ENCODE measurements at regions of chr3 and their contacts with region 1.

Region 1: GRCh38 chr3:138417559-138417982 is 16.8 kb upstream of the ESYT3 start:
- DNase-seq: peak; percentile 66 to 85 (median 79)
- H3K4me3 ChIP-seq: no peak overlapping the region
- H3K27ac ChIP-seq: no peak overlapping the region
- H3K27me3 ChIP-seq: no peaks in the 10 kb centered on the region
- CTCF ChIP-seq: peak; percentile 72 to 96 (median 89)

Region 2: DNA sequence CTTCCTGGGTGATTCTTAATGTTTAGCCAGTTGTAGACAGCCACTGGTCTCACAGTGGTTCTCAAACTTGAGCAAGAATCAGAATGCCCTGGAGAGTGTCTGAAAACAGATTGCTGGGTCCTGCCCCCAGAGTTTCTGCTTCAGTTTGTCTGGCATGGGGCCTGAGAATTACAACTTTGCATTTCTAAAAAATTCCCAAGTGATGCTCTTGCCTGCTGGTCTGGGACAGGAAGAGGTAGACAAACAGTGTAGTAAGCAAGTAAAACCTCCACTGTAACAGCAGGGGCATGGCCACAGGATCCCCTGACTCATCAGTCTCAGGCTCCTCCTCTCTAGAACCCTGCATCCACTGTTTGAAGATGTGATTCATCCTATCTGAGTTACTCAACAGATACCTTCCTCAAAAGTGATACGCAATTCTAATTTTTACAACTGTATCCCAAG is 338.6 kb before region 1 on chr3:
- intact Hi-C with region 1: no loop called
- DNase-seq: no peak
- H3K4me3 ChIP-seq: no peak overlapping the region
- H3K27ac ChIP-seq: no peak overlapping the region
- H3K27me3 ChIP-seq: no peaks in the 10 kb centered on the region
- CTCF ChIP-seq: no peak

Region 3: DNA sequence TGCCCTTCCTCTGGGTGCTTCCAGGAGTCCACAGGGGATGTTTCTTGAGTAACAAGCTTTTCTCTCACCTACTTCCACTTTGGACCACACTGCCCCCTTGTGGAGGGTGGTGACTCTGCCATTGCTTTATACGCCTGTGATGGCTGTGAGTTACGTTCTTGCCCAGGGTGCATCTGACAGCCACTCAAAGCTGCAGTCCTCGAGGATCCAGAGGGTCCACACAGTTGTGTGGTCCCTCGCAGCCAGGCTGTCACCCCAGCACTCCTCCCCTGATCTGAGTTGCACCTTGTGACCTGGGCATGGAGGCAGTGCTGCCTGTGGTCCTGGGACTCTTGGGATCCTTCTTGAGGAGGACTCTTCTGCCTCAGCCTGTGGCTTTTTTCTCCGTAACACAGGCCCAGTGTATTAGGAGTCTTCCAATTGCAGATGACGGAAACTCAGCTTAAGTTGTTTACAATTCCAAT is 506.0 kb after region 1 on chr3:
- intact Hi-C with region 1: loop called in 1 of 2 experiments (anchors 2 kb)
- DNase-seq: peak; percentile 28 to 86 (median 77)
- H3K4me3 ChIP-seq: no peak overlapping the region
- H3K27ac ChIP-seq: no peak overlapping the region
- H3K27me3 ChIP-seq: no peaks in the 10 kb centered on the region
- CTCF ChIP-seq: peak; percentile 46 to 91 (median 83)